Transverse colon (tissue), 4 donors: ENCODE measurements at regions of chr5 and their contacts with region 1.

Region 1: GRCh38 chr5:61331407-61332357 is at the start of gene ZSWIM6:
- DNase-seq: peak; percentile 100
- H3K4me3 ChIP-seq: peak within 1 kb of the TSS; percentile 78 to 94 (median 87)
- H3K27ac ChIP-seq: peak within 1 kb of the TSS; percentile 91 to 99 (median 98)
- H3K4me1 ChIP-seq: peaks cover 19 to 50% (median 38%) of the 10 kb centered on the region in 4 donors
- H3K27me3 ChIP-seq: no peaks in the 10 kb centered on the region
- CTCF ChIP-seq: no peak
- EP300 ChIP-seq: no peak
- POLR2A ChIP-seq: peak; percentile 95
- total RNA-seq, gene ZSWIM6: 7.8 to 25.5 (median 21.0) TPM

Region 2: GRCh38 chr5:60856066-60856465 is 475.6 kb before region 1 on chr5:
- in situ Hi-C with region 1: no loop called
- intact Hi-C with region 1: no loop called
- DNase-seq: no peak
- H3K4me3 ChIP-seq: no peak overlapping the region
- H3K27ac ChIP-seq: no peak overlapping the region
- H3K4me1 ChIP-seq: no peaks in the 10 kb centered on the region
- H3K27me3 ChIP-seq: no peaks in the 10 kb centered on the region
- CTCF ChIP-seq: no peak
- EP300 ChIP-seq: no peak
- POLR2A ChIP-seq: no peak

Region 3: GRCh38 chr5:60944904-60945812 is 386.5 kb before region 1 on chr5 and contains the starts of genes ERCC8 and NDUFAF2:
- in situ Hi-C with region 1: loop called in 1 of 4 experiments (anchors 25 kb)
- intact Hi-C with region 1: no loop called
- DNase-seq: peak; percentile 92
- H3K4me3 ChIP-seq: peak within 1 kb of the TSS; percentile 56 to 66 (median 64)
- H3K27ac ChIP-seq: peak within 1 kb of the TSS; percentile 76 to 90 (median 88)
- H3K4me1 ChIP-seq: peaks cover 0 to 23% (median 18%) of the 10 kb centered on the region in 4 donors
- H3K27me3 ChIP-seq: no peaks in the 10 kb centered on the region
- CTCF ChIP-seq: no peak
- EP300 ChIP-seq: no peak
- POLR2A ChIP-seq: peak; percentile 57
- total RNA-seq, gene ERCC8: 4.8 to 17.3 (median 11.3) TPM
- total RNA-seq, gene NDUFAF2: 8.2 to 26.5 (median 10.5) TPM

Region 4: GRCh38 chr5:61162010-61162831 is 169.5 kb before region 1 on chr5 and contains the start of gene SMIM15:
- in situ Hi-C with region 1: loop called in 3 of 4 experiments (anchors 10 to 25 kb)
- intact Hi-C with region 1: loop called (anchors 2 kb)
- DNase-seq: peak; percentile 93
- H3K4me3 ChIP-seq: peak within 1 kb of the TSS; percentile 70 to 87 (median 84)
- H3K27ac ChIP-seq: peak within 1 kb of the TSS; percentile 92 to 96 (median 94)
- H3K4me1 ChIP-seq: peaks cover 6 to 34% (median 24%) of the 10 kb centered on the region in 4 donors
- H3K27me3 ChIP-seq: no peaks in the 10 kb centered on the region
- CTCF ChIP-seq: peak in 2 of 5 experiments; percentile 33 to 55
- EP300 ChIP-seq: no peak
- POLR2A ChIP-seq: peak; percentile 85
- total RNA-seq, gene SMIM15: 6.6 to 56.9 (median 30.9) TPM

Region 5: GRCh38 chr5:61215996-61216395 is 115.7 kb before region 1 on chr5:
- in situ Hi-C with region 1: no loop called
- intact Hi-C with region 1: no loop called
- DNase-seq: no peak
- H3K4me3 ChIP-seq: no peak overlapping the region
- H3K27ac ChIP-seq: no peak overlapping the region
- H3K4me1 ChIP-seq: no peaks in the 10 kb centered on the region
- H3K27me3 ChIP-seq: no peaks in the 10 kb centered on the region
- CTCF ChIP-seq: no peak
- EP300 ChIP-seq: no peak
- POLR2A ChIP-seq: no peak

Region 6: GRCh38 chr5:61408476-61409168 is 76.9 kb after region 1 on chr5:
- in situ Hi-C with region 1: no loop called
- intact Hi-C with region 1: loop called (anchors 5 kb)
- DNase-seq: peak; percentile 99
- H3K4me3 ChIP-seq: peak overlapping the region in 2 of 4 donors; percentile 14 to 26
- H3K27ac ChIP-seq: peak overlapping the region; percentile 43 to 79 (median 64)
- H3K4me1 ChIP-seq: peaks cover 3 to 49% (median 16%) of the 10 kb centered on the region in 4 donors
- H3K27me3 ChIP-seq: no peaks in the 10 kb centered on the region
- CTCF ChIP-seq: no peak
- EP300 ChIP-seq: peak; percentile 94
- POLR2A ChIP-seq: no peak

Region 7: DNA sequence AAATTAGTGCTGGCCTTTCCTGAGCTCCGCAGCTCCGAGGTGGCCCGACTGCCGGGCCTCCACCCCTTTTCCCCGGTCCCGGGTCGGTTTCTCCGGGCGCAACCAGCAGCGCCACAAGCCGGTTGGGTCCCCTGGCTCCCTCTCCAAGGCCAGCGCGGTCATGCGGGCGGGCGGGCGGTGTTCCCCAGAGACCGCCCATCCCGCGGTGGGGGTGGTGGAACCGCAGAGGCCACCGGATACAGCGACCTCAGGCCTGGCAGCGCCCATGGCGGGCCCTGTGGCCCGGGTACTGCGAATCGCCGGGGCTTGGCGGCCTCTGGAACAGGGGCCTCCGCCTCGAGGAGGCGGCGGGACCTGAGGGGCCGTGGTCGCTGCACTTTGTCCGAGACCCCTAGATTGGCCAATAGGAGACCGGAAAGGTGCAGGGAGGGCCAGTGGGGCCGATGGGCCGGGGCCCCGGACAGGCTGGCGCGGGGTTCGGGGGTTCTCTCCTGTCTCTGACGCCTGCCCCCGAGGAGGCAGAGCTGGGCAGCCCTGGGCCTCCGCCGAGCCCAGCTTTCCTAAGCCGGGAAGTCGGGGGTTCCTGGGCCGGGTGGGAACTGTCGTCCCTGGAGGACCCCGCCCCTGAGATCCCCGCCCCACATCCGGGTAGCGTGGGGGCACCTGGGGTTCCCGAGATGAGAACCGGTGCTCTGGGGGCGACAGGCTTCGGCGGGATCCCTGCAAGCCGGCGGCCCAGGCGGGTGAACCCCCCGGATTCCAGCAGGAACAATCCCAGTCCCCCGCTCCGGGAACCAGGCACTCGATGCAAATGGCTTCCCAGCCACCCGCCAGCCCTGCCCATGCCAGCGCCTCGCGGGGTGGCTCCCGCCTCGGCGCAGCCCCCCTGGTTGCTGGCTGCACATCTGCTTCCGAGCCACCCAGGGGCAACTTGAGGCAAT is 294.3 kb after region 1 on chr5:
- in situ Hi-C with region 1: loop called in 1 of 4 experiments (anchors 25 kb)
- intact Hi-C with region 1: loop called (anchors 10 kb)
- DNase-seq: peak; percentile 83
- H3K4me3 ChIP-seq: peak overlapping the region; percentile 51 to 68 (median 64)
- H3K27ac ChIP-seq: peak overlapping the region; percentile 82 to 85 (median 83)
- H3K4me1 ChIP-seq: peaks cover 0 to 19% (median 11%) of the 10 kb centered on the region in 4 donors
- H3K27me3 ChIP-seq: no peaks in the 10 kb centered on the region
- CTCF ChIP-seq: no peak
- EP300 ChIP-seq: no peak
- POLR2A ChIP-seq: peak; percentile 66

Region 8: DNA sequence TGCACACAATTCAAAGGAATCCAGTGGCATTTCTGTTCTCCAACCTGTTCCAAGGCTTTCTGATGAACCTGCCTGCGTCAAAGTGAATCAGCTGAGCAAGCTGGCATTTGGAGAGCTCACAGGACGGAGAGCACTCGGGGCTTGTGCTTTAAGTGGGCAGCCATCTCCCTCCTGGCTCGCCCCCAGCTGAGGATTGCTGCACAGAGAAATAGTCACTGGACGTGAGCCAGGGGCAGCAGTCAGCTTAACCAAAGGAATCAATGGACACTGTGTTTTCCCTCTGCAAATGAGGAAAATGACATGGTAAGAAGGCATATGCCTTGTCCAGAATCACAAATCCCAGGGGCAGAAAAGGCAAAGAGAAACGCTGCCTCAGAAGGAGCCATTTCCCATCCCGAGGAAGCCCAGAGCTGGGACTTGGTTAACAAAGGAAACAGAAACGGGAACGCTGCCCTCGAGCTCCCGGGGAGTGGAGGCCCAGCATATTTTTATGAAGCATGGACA is 299.8 kb after region 1 on chr5:
- in situ Hi-C with region 1: loop called in 1 of 4 experiments (anchors 25 kb)
- intact Hi-C with region 1: loop called (anchors 10 kb)
- DNase-seq: peak; percentile 23
- H3K4me3 ChIP-seq: no peak overlapping the region
- H3K27ac ChIP-seq: peak overlapping the region; percentile 48 to 55 (median 54)
- H3K4me1 ChIP-seq: peaks cover 0 to 13% (median 2%) of the 10 kb centered on the region in 4 donors
- H3K27me3 ChIP-seq: no peaks in the 10 kb centered on the region
- CTCF ChIP-seq: no peak
- EP300 ChIP-seq: no peak
- POLR2A ChIP-seq: no peak

Region 9: GRCh38 chr5:62017092-62017491 is 685.4 kb after region 1 on chr5:
- in situ Hi-C with region 1: no loop called
- intact Hi-C with region 1: no loop called
- DNase-seq: no peak
- H3K4me3 ChIP-seq: no peak overlapping the region
- H3K27ac ChIP-seq: no peak overlapping the region
- H3K4me1 ChIP-seq: no peaks in the 10 kb centered on the region
- H3K27me3 ChIP-seq: no peaks in the 10 kb centered on the region
- CTCF ChIP-seq: no peak
- EP300 ChIP-seq: no peak
- POLR2A ChIP-seq: no peak